ENCODE measurements at regions of chr5 and their contacts with region 1.

Region 1: GRCh38 chr5:152505442-152506042 is 100.5 kb upstream of the NMUR2 start:
- ATAC-seq: peak; percentile 78 to 91 (median 86)
- H3K4me3 ChIP-seq: no peak overlapping the region
- H3K27ac ChIP-seq: no peak overlapping the region
- H3K4me1 ChIP-seq: peaks cover 3 to 7% of the 10 kb centered on the region in 2 donors

Region 2: DNA sequence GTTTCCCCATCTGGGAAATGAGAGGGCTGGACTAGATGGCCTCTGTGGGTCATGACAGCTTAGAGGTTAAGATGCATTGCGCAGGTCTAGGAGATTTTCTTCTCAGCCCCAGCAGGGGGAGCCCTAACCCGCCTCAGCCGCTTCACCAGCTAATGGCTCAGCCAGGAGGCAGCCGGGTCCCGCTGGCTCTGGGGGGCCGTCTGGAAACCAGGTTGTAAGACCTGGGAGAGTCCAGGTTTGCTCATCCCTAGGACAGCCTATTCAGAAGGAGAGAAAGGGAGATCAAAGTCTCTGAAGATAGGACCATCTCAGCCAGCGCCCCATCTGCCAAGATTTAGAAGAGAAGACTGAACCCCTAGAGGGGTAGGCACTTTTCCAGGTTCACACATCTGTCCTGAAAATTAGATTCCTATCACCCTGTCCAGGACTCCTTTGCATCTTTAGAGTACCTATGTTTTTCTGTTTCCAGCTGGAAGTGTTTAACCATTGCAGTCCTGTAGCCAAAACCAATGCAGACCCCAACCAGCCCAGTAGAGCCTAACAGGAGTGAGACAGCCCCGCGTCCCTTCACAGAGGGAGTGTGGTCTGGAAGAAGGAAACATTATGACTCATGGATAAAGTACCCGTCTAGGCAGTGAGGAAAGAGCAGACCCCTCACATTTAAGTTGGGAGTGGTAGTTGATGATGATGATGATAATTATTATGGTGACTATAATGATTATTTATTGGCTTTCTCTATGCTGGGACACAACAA is 846.4 kb before region 1 on chr5:
- in situ Hi-C with region 1: loop called in 3 of 9 experiments (anchors 25 kb)
- ATAC-seq: peak; percentile 63 to 98 (median 94)
- H3K4me3 ChIP-seq: no peak overlapping the region
- H3K27ac ChIP-seq: no peak overlapping the region
- H3K4me1 ChIP-seq: no peaks in the 10 kb centered on the region

Region 3: DNA sequence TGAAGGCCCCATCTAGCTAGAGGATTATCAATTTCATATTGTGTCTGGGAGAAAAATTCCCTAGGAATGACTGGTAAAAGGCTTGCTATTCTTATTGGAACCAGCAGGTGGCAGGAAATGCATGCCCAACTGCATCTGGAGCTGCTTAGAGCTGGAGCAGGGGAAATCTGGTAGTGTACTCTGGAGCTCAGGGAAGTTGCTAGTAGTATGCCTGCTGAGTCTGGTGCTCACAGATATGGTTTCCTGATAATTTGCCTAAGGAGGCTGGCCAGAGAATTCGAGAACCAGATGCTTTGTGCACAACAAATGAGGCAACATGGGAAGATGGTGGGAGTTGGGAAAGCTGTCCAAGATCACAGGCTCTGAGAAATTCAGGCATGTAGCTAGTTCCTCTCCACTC is 680.1 kb before region 1 on chr5:
- in situ Hi-C with region 1: loop called in 5 of 9 experiments (anchors 25 kb)
- ATAC-seq: peak; percentile 82 to 96 (median 92)
- H3K4me3 ChIP-seq: no peak overlapping the region
- H3K27ac ChIP-seq: no peak overlapping the region
- H3K4me1 ChIP-seq: peaks cover 14 to 17% of the 10 kb centered on the region in 2 donors

Region 4: DNA sequence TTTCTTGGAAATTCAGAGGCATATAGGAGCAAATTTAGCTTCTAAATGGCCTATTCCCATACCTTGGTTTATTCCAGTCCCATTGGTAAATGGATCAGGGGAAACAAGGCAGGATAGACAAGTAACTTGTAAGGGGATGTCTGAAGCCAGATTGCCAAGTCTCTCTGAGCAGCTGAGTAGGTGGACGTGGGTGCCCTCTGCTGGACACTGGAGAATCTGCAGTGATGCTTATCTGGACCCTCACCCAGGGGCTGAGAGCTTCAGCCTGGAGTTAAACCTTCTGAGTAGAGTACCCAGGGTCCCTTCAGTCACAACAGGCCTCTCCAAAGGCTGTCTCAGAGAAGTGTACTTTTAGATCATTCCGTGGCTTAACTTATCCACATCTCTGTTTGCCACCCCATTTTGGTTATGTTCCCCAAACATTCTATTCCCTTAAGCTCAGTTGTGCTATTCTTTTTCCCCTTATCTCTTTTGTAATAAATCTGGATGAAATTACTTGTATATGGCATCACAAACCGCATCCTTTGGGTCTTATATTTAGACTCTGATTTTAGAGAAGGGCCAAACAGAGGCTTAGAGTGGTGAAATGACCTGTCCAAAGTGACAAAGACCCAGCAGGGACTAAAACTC is 362.6 kb before region 1 on chr5:
- in situ Hi-C with region 1: loop called in 1 of 9 experiments (anchors 25 kb)
- ATAC-seq: peak; percentile 52 to 89 (median 74)
- H3K4me3 ChIP-seq: no peak overlapping the region
- H3K27ac ChIP-seq: no peak overlapping the region
- H3K4me1 ChIP-seq: peaks cover 29 to 42% of the 10 kb centered on the region in 2 donors

Region 5: DNA sequence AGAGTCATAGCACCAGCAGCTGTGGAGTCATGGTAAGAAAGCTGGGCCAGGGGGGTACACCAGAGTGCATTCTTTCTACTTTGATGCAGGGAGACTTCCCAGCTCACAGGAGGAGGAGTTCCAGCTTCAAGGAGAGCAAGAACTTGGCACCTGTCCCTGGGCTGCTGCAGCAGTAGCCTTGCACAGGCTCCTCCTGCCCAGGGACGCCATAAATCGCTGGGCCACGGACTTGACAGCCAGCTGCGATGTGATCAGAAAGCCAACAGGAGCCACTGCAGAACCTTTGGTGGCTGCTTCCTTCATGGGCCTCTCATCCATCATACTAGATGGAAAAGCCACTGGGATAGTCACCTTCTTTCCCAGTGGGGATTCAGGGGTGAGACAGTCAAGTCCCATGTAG is 335.2 kb before region 1 on chr5:
- in situ Hi-C with region 1: loop called in 1 of 9 experiments (anchors 25 kb)
- ATAC-seq: peak in 6 of 8 experiments; percentile 41 to 100 (median 99)
- H3K4me3 ChIP-seq: no peak overlapping the region
- H3K27ac ChIP-seq: no peak overlapping the region
- H3K4me1 ChIP-seq: peaks cover 16 to 35% of the 10 kb centered on the region in 2 donors

Region 6: DNA sequence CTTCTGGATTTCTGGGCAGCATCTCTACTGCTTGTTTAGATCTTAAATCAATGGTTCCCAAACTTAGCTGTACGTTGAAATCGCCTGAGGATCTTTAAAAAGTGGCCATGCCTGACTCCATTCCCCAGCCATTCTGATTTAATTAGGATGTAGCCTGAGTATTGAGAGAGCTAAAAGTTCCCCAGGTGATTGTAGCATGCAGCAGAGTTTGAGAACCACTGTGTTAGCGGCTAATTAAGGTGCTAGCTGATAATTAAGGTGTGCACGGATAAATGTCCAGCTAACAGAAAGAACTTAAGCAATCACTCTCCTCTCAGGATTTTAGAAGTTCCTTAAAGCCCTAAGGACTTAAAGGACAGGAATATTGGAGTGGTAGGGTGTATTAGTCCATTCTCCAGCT is 189.6 kb before region 1 on chr5:
- in situ Hi-C with region 1: no loop called
- ATAC-seq: no peak
- H3K4me3 ChIP-seq: no peak overlapping the region
- H3K27ac ChIP-seq: no peak overlapping the region
- H3K4me1 ChIP-seq: no peaks in the 10 kb centered on the region

Region 7: GRCh38 chr5:152349683-152350526 is 155.6 kb before region 1 on chr5:
- in situ Hi-C with region 1: loop called in 1 of 9 experiments (anchors 25 kb)
- ATAC-seq: peak; percentile 65 to 96 (median 80)
- H3K4me3 ChIP-seq: no peak overlapping the region
- H3K27ac ChIP-seq: no peak overlapping the region
- H3K4me1 ChIP-seq: peaks cover 8 to 10% of the 10 kb centered on the region in 2 donors

Region 8: GRCh38 chr5:152412129-152412528 is 93.4 kb before region 1 on chr5:
- in situ Hi-C with region 1: no loop called
- ATAC-seq: no peak
- H3K4me3 ChIP-seq: no peak overlapping the region
- H3K27ac ChIP-seq: no peak overlapping the region
- H3K4me1 ChIP-seq: no peaks in the 10 kb centered on the region

Measured in motor neuron (in vitro differentiated cells).